CD8-positive, alpha-beta T cell (primary cell): ENCODE measurements at regions of chr5 and their contacts with region 1.

Region 1: GRCh38 chr5:66757188-66757833 is 161.1 kb downstream of the MAST4 start:
- DNase-seq: peak in 4 of 9 experiments; percentile 13 to 53 (median 31)
- ATAC-seq: no peak
- H3K4me3 ChIP-seq: no peak overlapping the region
- H3K4me3 Mint-ChIP-seq: no peak overlapping the region
- H3K27ac ChIP-seq: no peak overlapping the region
- H3K27ac Mint-ChIP-seq: no peak overlapping the region
- H3K4me1 ChIP-seq: no peaks in the 10 kb centered on the region
- H3K4me1 Mint-ChIP-seq: no peaks in the 10 kb centered on the region
- H3K27me3 ChIP-seq: no peaks in the 10 kb centered on the region
- H3K27me3 Mint-ChIP-seq: peaks cover 13% of the 10 kb centered on the region
- CTCF ChIP-seq: peak; percentile 36

Region 2: GRCh38 chr5:66171349-66172344 is 585.7 kb before region 1 on chr5:
- CTCF ChIA-PET with region 1: interaction called, 4 read pairs
- POLR2A ChIA-PET with region 1: no interaction called
- intact Hi-C with region 1: loop called (anchors 5 kb)
- DNase-seq: peak in 8 of 9 experiments; percentile 31 to 84 (median 60)
- ATAC-seq: peak; percentile 83
- H3K4me3 ChIP-seq: no peak overlapping the region
- H3K4me3 Mint-ChIP-seq: no peak overlapping the region
- H3K27ac ChIP-seq: peak overlapping the region; percentile 4 to 16
- H3K27ac Mint-ChIP-seq: peak overlapping the region; percentile 15
- H3K4me1 ChIP-seq: peaks cover 7% of the 10 kb centered on the region
- H3K4me1 Mint-ChIP-seq: peaks cover 18% of the 10 kb centered on the region
- H3K27me3 ChIP-seq: no peaks in the 10 kb centered on the region
- H3K27me3 Mint-ChIP-seq: no peaks in the 10 kb centered on the region
- CTCF ChIP-seq: peak; percentile 66

Region 3: DNA sequence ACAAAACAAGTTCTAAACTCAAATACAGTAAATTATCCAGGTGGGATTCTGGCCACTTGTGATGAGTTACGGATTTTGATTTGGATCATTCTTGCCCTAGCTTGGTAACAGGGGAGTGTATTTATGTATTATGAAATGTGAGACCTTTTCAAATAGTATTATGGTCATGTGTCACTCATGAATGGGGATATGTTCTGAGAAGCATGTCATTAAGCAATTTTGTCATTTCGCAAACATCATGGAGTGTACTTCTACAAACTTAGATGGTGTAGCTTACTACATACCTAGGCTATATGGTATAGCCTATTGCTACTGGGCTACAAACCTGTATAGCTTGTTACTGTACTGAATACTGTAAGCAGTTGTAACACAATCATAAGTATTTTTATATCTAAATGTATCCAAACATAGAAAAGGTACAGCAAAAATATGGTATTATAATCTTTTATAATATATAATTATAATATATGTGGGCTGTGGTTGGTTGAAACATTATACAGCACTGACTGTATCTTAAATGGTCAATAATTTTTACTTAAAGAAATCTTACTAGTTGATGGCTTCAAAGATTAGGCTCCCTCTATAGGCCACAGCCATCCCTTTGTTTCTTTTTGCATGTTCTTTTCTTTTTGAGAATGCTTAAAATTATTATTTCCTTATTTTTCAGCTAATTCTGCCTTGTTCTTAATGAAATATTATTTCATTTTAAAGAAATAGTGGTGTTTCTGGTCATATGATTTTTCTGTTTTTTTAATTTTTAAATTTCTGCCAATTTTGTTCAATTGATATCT is 32.8 kb before region 1 on chr5:
- CTCF ChIA-PET with region 1: no interaction called
- POLR2A ChIA-PET with region 1: no interaction called
- intact Hi-C with region 1: no loop called
- DNase-seq: no peak
- ATAC-seq: no peak
- H3K4me3 ChIP-seq: no peak overlapping the region
- H3K4me3 Mint-ChIP-seq: no peak overlapping the region
- H3K27ac ChIP-seq: no peak overlapping the region
- H3K27ac Mint-ChIP-seq: no peak overlapping the region
- H3K4me1 ChIP-seq: no peaks in the 10 kb centered on the region
- H3K4me1 Mint-ChIP-seq: no peaks in the 10 kb centered on the region
- H3K27me3 ChIP-seq: no peaks in the 10 kb centered on the region
- H3K27me3 Mint-ChIP-seq: no peaks in the 10 kb centered on the region
- CTCF ChIP-seq: no peak

Region 4: GRCh38 chr5:66738136-66738535 is 19.2 kb before region 1 on chr5:
- CTCF ChIA-PET with region 1: no interaction called
- POLR2A ChIA-PET with region 1: no interaction called
- intact Hi-C with region 1: no loop called
- DNase-seq: no peak
- ATAC-seq: no peak
- H3K4me3 ChIP-seq: no peak overlapping the region
- H3K4me3 Mint-ChIP-seq: no peak overlapping the region
- H3K27ac ChIP-seq: no peak overlapping the region
- H3K27ac Mint-ChIP-seq: no peak overlapping the region
- H3K4me1 ChIP-seq: no peaks in the 10 kb centered on the region
- H3K4me1 Mint-ChIP-seq: no peaks in the 10 kb centered on the region
- H3K27me3 ChIP-seq: peaks cover 0 to 3% of the 10 kb centered on the region in 2 experiments
- H3K27me3 Mint-ChIP-seq: peaks cover 2% of the 10 kb centered on the region
- CTCF ChIP-seq: no peak

Region 5: GRCh38 chr5:67493676-67494075 is 736.4 kb after region 1 on chr5:
- CTCF ChIA-PET with region 1: no interaction called
- POLR2A ChIA-PET with region 1: no interaction called
- intact Hi-C with region 1: no loop called
- DNase-seq: peak in 2 of 9 experiments; percentile 27 to 34
- ATAC-seq: no peak
- H3K4me3 ChIP-seq: no peak overlapping the region
- H3K4me3 Mint-ChIP-seq: no peak overlapping the region
- H3K27ac ChIP-seq: no peak overlapping the region
- H3K27ac Mint-ChIP-seq: no peak overlapping the region
- H3K4me1 ChIP-seq: no peaks in the 10 kb centered on the region
- H3K4me1 Mint-ChIP-seq: peaks cover 8% of the 10 kb centered on the region
- H3K27me3 ChIP-seq: no peaks in the 10 kb centered on the region
- H3K27me3 Mint-ChIP-seq: no peaks in the 10 kb centered on the region
- CTCF ChIP-seq: no peak